ENCODE measurements at regions of chr6 and their contacts with region 1.

Region 1: DNA sequence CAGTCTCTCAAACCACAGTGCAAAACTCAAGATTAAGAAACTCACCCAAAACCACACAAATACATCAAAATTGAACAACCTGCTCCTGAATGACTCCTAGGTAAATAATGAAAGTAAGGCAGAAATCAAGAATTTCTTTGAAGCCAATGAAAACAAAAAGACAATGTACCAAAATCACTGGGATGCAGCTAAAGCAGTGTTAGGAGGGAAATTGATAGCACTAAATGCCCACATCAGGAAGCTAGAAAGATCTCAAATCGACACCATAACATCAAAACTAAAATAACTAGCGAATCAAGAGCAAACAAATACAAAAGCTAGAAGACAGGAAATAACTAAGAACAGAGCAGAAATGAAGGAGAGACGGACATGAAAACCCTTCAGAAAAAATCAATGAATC is 70.5 kb downstream of the TBC1D32 start:
- DNase-seq: no peak
- ATAC-seq: no peak
- H3K4me3 ChIP-seq: no peak overlapping the region
- H3K27ac ChIP-seq: no peak overlapping the region
- H3K4me1 ChIP-seq: no peaks in the 10 kb centered on the region
- H3K27me3 ChIP-seq: no peaks in the 10 kb centered on the region
- CTCF ChIP-seq: no peak
- POLR2A ChIP-seq: no peak
- RAD21 ChIP-seq: no peak

Region 2: GRCh38 chr6:121305957-121306607 is 42.3 kb after region 1 on chr6:
- CTCF ChIA-PET with region 1: no interaction called
- POLR2A ChIA-PET with region 1: no interaction called
- dilution Hi-C with region 1: no loop called
- in situ Hi-C with region 1: no loop called
- intact Hi-C with region 1: loop called (anchors 2 kb)
- DNase-seq: peak; percentile 25
- ATAC-seq: no peak
- H3K4me3 ChIP-seq: no peak overlapping the region
- H3K27ac ChIP-seq: no peak overlapping the region
- H3K4me1 ChIP-seq: peaks cover 6% of the 10 kb centered on the region
- H3K27me3 ChIP-seq: no peaks in the 10 kb centered on the region
- CTCF ChIP-seq: peak; percentile 51
- POLR2A ChIP-seq: no peak
- RAD21 ChIP-seq: peak; percentile 54